ENCODE measurements at regions of chr15 and their contacts with region 1.

Region 1: DNA sequence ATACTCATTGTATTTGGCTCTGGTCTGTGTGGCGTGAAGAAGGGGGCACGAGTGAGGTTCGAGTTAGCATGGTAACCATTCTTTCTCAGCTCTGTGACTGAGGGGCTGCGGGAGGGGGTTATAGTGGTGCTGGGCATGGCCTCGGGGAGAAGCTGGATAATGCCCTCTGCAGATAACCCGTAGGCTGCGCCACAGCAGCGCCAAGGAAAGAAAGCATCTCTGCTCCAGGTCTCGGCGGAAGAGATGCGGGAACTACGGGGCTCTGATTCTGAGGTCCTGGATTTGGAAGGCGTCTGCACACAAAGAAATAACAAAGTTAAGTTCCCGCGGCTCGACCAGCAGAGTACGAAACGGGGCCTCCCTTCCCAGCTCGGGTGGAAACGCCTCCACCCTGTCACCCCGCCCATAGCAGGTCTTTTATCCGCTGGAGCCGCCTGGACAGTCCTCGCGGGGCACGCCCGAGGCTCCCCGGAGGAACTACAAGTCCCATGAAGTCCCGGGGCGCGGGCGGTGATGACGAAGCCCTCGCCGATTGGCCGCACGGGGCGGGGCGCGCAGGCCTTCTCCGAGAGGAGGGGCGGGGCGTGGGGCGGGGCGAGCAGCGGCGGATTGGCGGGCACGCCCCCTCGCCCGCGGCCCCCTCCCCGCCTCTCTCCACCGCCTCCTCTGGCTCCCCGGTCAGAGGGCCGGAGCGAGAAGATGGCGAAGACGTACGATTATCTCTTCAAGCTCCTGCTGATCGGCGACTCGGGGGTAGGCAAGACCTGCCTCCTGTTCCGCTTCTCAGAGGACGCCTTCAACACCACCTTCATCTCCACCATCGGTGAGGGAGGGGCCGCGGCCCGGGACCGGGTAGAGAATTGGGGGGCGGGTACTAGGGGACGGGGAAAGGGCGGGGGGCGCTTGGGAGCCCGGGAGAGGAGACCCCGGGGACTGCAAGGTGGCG is at the start of gene RAB8B:
- DNase-seq: peak; percentile 100
- ATAC-seq: peak; percentile 76
- H3K4me3 Mint-ChIP-seq: peak within 1 kb of the TSS; percentile 99
- H3K27ac Mint-ChIP-seq: peak within 1 kb of the TSS; percentile 97
- H3K4me1 Mint-ChIP-seq: peaks cover 39% of the 10 kb centered on the region
- H3K27me3 Mint-ChIP-seq: no peaks in the 10 kb centered on the region
- total RNA-seq, gene RAB8B: 147 to 260 TPM

Region 2: DNA sequence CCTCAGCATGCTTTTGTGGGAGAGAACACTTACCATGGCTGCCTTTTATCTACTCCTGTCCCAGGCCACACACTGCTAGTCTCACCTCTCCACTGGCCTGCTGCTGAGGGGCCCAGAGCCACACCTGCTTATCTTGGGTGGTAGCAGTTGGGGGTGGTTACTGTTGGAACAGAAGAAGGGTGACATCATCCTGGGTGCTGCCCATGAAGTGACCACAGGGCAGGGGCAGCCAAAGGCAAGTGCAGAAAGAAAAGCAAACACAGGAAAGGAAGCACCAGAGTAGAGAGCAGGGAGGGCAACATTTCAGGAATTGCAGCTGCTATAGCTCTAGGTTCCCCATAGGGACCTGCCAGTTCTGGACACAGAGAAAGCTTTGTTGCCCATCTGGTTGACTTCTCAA is 1474.1 kb before region 1 on chr15:
- CTCF ChIA-PET with region 1: no interaction called
- POLR2A ChIA-PET with region 1: no interaction called
- intact Hi-C with region 1: no loop called
- DNase-seq: no peak
- ATAC-seq: no peak
- H3K4me3 Mint-ChIP-seq: no peak overlapping the region
- H3K27ac Mint-ChIP-seq: no peak overlapping the region
- H3K4me1 Mint-ChIP-seq: no peaks in the 10 kb centered on the region
- H3K27me3 Mint-ChIP-seq: peaks cover 9% of the 10 kb centered on the region

Region 3: DNA sequence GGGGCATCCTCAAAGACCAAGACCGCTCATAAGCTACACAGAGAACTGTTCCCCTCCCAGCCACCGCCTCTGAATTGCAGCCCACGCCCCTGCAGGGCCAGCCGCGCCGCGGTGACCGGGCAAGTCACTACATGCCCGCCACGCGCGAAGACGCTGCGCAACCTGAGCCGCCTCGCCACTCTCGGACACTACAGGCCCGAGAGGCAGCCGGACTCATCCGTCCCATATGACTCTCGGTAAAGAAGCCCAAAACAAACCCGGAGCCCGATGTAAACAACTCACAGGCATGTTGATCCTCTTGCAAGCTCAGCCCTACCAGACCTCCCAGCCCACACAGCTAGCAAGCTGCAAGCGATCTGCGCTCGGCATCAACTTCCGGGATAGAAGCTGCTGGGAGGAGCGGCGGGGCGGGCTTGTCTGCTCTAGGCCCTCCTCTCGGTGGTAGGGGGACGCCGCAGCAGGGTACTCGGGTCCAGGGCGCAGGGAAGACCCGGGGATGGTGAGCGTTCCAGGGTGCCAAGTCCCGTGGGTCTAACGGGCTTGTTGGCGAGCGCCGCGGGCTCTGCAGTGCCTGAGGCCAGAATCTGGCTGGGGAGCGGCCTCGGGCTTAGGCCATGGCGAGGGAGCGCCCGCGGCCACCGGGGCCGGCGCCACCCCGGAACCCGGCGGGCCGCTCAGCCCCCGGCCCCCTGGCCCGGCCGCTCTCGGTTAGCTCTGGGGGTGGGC is 31.9 kb before region 1 on chr15 and contains the start of gene RPS27L:
- CTCF ChIA-PET with region 1: interaction called, 3 read pairs
- POLR2A ChIA-PET with region 1: interaction called, 9 read pairs
- intact Hi-C with region 1: loop called (anchors 1 to 2 kb)
- DNase-seq: peak; percentile 95
- ATAC-seq: peak; percentile 98
- H3K4me3 Mint-ChIP-seq: peak within 1 kb of the TSS; percentile 100
- H3K27ac Mint-ChIP-seq: peak within 1 kb of the TSS; percentile 98
- H3K4me1 Mint-ChIP-seq: peaks cover 19% of the 10 kb centered on the region
- H3K27me3 Mint-ChIP-seq: no peaks in the 10 kb centered on the region
- total RNA-seq, gene RPS27L: 117 to 143 TPM

Region 4: DNA sequence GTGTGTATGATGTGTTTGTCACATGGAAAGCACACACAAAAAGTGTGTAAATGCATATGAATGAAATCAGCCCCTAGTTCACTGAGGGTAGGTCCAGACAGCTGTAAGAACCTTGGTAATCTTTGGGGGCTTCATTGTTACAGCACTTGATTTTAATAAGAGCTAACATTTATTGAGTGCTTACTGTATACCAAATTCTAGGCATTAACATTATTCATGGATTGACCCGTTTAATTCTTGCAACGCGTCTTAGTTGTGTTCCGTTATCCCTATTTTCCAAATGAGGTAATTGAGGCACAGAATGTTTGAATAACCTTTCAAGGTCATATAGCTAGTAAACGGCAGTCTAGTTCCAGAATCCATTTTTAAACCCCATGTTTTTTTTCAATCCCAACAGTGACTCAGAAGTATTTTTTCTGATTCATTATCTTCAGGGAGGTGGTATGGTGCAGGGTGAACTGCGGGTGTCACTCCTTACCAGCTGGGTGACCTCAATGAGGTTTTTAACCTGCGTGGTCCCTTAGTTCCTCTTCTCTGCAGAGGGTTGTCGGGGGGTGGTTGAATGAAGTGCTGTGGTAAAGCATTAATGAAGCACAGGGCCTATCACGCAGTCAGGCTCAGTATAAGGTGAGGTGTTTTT is 14.4 kb after region 1 on chr15:
- CTCF ChIA-PET with region 1: interaction called, 18 read pairs
- POLR2A ChIA-PET with region 1: interaction called, 8 read pairs
- intact Hi-C with region 1: loop called (anchors 1 kb)
- DNase-seq: peak; percentile 71
- ATAC-seq: peak; percentile 85
- H3K4me3 Mint-ChIP-seq: no peak overlapping the region
- H3K27ac Mint-ChIP-seq: peak overlapping the region; percentile 82
- H3K4me1 Mint-ChIP-seq: peaks cover 95% of the 10 kb centered on the region
- H3K27me3 Mint-ChIP-seq: no peaks in the 10 kb centered on the region

Region 5: DNA sequence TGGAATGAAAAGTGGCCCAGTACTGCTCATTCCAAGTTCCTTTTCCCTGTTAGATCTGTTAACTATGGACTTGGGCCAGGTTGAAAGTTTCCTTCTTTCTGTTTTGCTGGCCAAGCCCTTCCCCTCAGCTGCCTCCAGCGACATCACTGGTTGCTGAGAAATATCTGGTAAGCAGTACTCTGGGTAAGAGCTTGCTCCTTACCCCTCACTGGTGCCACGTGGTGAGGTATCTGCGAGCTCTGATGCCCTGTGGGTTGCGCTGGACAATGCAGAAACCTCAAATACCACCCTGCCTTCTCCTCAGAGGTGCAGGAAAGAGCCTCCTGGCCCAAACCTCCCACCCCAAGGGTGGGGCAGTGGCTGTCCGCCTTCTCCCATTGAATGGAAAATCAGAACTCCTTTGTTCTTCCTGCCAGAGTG is 45.3 kb after region 1 on chr15:
- CTCF ChIA-PET with region 1: interaction called, 5 read pairs
- POLR2A ChIA-PET with region 1: interaction called, 6 read pairs
- intact Hi-C with region 1: loop called (anchors 1 to 5 kb)
- DNase-seq: no peak
- ATAC-seq: no peak
- H3K4me3 Mint-ChIP-seq: no peak overlapping the region
- H3K27ac Mint-ChIP-seq: peak overlapping the region; percentile 67
- H3K4me1 Mint-ChIP-seq: peaks cover 79% of the 10 kb centered on the region
- H3K27me3 Mint-ChIP-seq: no peaks in the 10 kb centered on the region

Region 6: DNA sequence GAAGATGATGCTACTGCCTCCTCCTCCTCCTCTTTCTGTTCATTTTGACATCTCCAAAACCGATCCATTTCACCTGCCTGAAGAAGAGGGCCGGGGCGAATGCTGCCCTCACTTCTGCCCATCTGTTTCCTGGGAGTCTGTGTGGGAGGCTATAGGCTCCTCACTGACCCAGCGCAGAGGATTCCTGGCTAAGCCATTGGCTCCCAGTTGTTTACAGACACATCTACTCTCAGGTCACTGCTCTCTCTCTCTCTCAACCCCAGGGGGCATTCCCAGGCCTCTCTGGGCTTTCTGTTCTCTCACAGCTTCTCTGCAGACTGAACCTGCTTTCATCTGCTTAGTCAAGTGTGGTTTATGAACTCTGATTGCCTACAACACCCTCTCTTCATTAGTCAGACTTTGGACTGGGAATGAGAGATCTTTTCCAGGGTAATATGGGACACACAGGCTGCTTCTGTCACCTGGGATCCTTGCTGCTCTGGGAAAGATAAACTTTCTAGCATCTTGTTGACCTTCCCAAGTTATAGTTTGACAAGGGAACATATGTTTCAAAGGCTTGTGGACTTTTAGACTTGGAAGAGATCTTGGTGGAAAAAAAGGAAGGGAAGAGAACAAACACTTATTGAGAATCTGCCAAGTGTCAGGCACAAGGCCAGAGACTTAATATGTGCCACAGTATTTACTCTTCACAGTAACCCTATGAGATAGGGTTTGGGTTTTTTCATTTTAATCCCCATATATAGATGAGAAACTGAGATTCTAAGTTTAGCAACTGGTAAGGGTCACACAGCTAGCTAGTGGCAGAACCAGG is 285.0 kb after region 1 on chr15:
- CTCF ChIA-PET with region 1: no interaction called
- POLR2A ChIA-PET with region 1: no interaction called
- intact Hi-C with region 1: loop called in 1 of 2 experiments (anchors 1 kb)
- DNase-seq: peak; percentile 84
- ATAC-seq: peak; percentile 79
- H3K4me3 Mint-ChIP-seq: peak overlapping the region; percentile 9
- H3K27ac Mint-ChIP-seq: peak overlapping the region; percentile 94
- H3K4me1 Mint-ChIP-seq: peaks cover 59% of the 10 kb centered on the region
- H3K27me3 Mint-ChIP-seq: no peaks in the 10 kb centered on the region

Measured in activated CD4-positive, alpha-beta T cell treated with anti-CD3 and anti-CD28 coated beads for 36 hours (primary cell).